PC-3 (cell line): ENCODE measurements at regions of chr6 and their contacts with region 1.

Region 1: DNA sequence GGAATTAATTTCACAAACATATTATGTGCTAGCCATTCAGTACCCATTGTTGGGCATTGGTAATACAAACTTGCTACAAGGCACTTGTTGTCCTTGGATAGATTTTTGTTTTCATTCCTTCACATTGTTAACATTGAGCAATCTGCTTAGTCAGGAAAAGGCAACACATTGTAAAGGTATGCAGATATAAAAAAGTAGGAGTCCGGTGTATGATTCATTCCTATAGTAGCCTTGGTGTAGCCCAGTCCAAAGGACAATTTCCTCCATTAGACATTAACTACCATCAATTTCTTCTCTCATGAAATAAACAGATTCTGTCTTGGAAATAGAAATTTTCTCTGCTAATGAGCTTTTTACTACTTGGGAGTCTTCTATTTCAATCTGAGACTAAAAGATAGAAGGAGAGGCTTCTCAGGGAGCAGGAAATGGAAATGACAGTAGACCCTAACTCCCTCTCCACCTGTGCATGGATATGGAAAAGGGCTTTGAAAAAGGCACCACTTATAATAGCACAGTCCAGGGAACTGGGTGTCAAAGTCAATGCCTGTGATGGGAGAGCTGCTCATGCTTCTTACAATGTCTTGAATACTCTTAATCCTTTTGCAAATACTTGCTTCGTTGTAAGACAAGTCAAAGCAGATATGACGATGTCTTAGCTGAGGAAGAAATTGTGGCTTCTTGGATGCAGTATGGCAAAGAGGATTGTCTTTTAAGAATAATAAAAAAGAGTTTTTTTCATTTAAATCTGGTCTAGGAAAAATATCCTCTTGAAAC is 369.4 kb upstream of the CITED2 start:
- DNase-seq: peak; percentile 88
- ATAC-seq: peak; percentile 98
- H3K4me3 ChIP-seq: no peak overlapping the region
- H3K27ac ChIP-seq: no peak overlapping the region
- H3K4me1 ChIP-seq: peaks cover 18% of the 10 kb centered on the region
- H3K27me3 ChIP-seq: no peaks in the 10 kb centered on the region
- CTCF ChIP-seq: no peak

Region 2: DNA sequence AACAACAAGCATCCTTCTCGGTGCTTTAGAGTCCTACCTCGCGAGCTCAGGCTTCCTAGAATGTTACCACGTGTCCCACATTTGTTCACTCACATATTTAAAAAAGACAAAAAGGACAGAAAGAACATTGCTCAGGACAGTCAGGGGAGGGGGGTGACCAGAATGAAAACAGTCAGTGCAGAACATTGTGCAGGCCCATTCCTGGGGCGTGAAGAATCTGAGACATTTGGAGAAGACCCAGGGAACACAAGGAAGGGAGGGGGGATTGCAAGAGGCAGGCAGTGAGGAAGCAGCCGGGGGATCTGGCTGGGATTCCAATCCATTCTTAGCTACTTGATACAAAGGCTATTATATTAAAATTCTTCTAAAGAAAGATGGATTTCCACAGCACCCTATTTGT is 99.0 kb before region 1 on chr6:
- CTCF ChIA-PET with region 1: no interaction called
- POLR2A ChIA-PET with region 1: no interaction called
- intact Hi-C with region 1: no loop called
- DNase-seq: no peak
- ATAC-seq: no peak
- H3K4me3 ChIP-seq: no peak overlapping the region
- H3K27ac ChIP-seq: no peak overlapping the region
- H3K4me1 ChIP-seq: no peaks in the 10 kb centered on the region
- H3K27me3 ChIP-seq: no peaks in the 10 kb centered on the region
- CTCF ChIP-seq: no peak

Region 3: GRCh38 chr6:139655790-139656687 is 87.8 kb before region 1 on chr6:
- CTCF ChIA-PET with region 1: no interaction called
- POLR2A ChIA-PET with region 1: no interaction called
- intact Hi-C with region 1: no loop called
- DNase-seq: peak; percentile 77
- ATAC-seq: peak; percentile 99
- H3K4me3 ChIP-seq: no peak overlapping the region; the same call in 1 of the 2 replicates
- H3K27ac ChIP-seq: peak overlapping the region; percentile 59
- H3K4me1 ChIP-seq: peaks cover 16% of the 10 kb centered on the region
- H3K27me3 ChIP-seq: no peaks in the 10 kb centered on the region
- CTCF ChIP-seq: no peak

Region 4: DNA sequence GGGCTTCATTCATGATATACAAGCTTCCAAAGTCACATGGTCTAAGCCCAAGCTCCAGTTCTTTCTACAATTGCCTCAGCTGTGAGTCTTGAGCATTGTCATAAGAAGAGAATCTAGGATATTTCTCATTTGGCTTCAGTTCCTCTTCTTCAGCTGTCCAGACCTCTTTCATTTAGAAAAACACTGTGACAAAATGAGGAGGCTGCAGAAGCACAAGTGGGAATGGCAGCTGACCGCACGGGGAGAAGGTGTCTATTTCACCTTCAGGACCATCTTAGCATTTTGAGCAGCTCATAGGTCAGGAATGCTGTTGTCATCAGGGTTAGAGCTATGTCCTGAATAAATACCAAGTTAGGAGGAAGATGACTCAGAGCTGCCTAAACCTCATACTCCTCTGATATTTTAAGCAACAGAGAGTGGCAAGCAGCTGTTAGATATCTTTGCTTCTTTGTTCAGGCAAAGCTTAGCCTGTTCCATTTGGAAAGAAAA is 20.7 kb after region 1 on chr6:
- CTCF ChIA-PET with region 1: no interaction called
- POLR2A ChIA-PET with region 1: interaction called, 3 read pairs
- intact Hi-C with region 1: loop called (anchors 2 kb)
- DNase-seq: peak; percentile 88
- ATAC-seq: peak; percentile 84
- H3K4me3 ChIP-seq: peak overlapping the region; percentile 43; the same call in 1 of the 2 replicates
- H3K27ac ChIP-seq: peak overlapping the region; percentile 79
- H3K4me1 ChIP-seq: peaks cover 47% of the 10 kb centered on the region
- H3K27me3 ChIP-seq: no peaks in the 10 kb centered on the region
- CTCF ChIP-seq: no peak

Region 5: DNA sequence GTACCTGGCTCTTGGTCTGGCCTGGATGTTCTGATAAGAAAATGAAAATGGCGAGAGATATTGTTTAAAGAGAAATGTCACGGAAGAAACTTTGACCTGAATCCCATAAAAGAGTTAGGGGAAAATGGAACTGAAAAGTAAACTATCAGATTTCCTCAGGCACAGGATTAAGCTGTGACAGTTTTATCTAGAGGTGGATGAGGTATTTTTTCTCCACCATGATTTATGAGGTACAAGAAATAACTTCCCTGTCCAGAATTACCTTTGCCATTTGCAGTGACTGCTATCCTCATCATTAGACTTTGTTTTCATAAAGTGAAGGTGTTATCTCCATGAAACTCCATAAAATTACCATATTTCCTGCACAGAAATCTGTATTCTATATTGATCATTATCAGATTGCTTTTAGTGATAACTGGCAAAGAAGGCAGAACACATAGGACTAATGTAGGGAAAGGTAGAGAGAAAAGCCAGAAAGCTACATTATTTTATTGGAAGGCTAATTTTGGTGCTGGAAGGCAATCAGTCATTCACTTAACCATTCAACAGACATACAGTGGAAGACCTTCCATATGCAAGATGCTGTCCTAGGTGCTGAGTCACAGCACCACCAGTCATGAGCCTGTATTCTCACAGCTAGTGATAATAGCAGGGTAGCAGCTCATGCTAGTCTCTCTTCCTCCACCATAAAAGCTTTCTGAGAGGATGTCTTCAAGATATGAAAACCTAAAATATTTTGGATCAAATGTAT is 57.9 kb after region 1 on chr6:
- CTCF ChIA-PET with region 1: no interaction called
- POLR2A ChIA-PET with region 1: no interaction called
- intact Hi-C with region 1: no loop called
- DNase-seq: no peak
- ATAC-seq: no peak
- H3K4me3 ChIP-seq: no peak overlapping the region
- H3K27ac ChIP-seq: no peak overlapping the region
- H3K4me1 ChIP-seq: no peaks in the 10 kb centered on the region
- H3K27me3 ChIP-seq: no peaks in the 10 kb centered on the region
- CTCF ChIP-seq: no peak

Region 6: GRCh38 chr6:140806431-140806830 is 1062.6 kb after region 1 on chr6:
- CTCF ChIA-PET with region 1: no interaction called
- POLR2A ChIA-PET with region 1: no interaction called
- intact Hi-C with region 1: no loop called
- DNase-seq: peak; percentile 8
- ATAC-seq: no peak
- H3K4me3 ChIP-seq: no peak overlapping the region
- H3K27ac ChIP-seq: no peak overlapping the region
- H3K4me1 ChIP-seq: no peaks in the 10 kb centered on the region
- H3K27me3 ChIP-seq: no peaks in the 10 kb centered on the region
- CTCF ChIP-seq: no peak